T-cell (primary cell): ENCODE measurements at regions of chr1 and their contacts with region 1.

Region 1: DNA sequence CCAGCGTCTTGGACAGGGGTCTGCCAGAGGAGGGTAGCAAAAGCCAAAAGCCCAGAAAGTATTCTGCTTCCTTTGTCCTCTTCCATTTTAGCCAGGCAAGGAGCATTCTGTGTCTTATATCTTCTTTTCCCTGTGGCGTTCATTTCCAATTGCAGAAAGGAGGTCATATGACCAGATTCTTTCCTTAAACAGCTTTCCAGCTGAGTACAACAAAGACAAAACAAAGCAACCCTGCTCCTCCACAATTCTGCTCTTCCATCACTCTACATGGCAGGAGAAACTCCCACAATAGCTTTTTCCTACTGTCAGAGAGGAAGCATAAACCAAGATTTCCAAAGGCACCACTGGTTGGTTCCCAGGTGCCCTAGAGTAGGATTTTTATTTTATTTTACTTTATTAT is 19.7 kb downstream of the ENSA start:
- DNase-seq: no peak
- ATAC-seq: no peak
- H3K4me3 ChIP-seq: no peak overlapping the region
- H3K4me3 Mint-ChIP-seq: no peak overlapping the region
- H3K27ac ChIP-seq: peak overlapping the region; percentile 99
- H3K27ac Mint-ChIP-seq: peak overlapping the region in 1 of 2 donors; percentile 58
- H3K4me1 ChIP-seq: peaks cover 11 to 45% of the 10 kb centered on the region in 2 experiments
- H3K4me1 Mint-ChIP-seq: peaks cover 25 to 47% (median 42%) of the 10 kb centered on the region in 3 donors
- H3K27me3 ChIP-seq: no peaks in the 10 kb centered on the region
- H3K27me3 Mint-ChIP-seq: no peaks in the 10 kb centered on the region

Region 2: GRCh38 chr1:150650199-150650598 is 40.5 kb after region 1 on chr1:
- CTCF ChIA-PET with region 1: no interaction called
- POLR2A ChIA-PET with region 1: interaction called, 6 to 16 read pairs
- DNase-seq: no peak
- ATAC-seq: no peak
- H3K4me3 ChIP-seq: no peak overlapping the region
- H3K4me3 Mint-ChIP-seq: no peak overlapping the region
- H3K27ac ChIP-seq: no peak overlapping the region
- H3K27ac Mint-ChIP-seq: no peak overlapping the region
- H3K4me1 ChIP-seq: no peaks in the 10 kb centered on the region
- H3K4me1 Mint-ChIP-seq: peaks cover 0 to 3% (median 0%) of the 10 kb centered on the region in 3 donors
- H3K27me3 ChIP-seq: no peaks in the 10 kb centered on the region
- H3K27me3 Mint-ChIP-seq: no peaks in the 10 kb centered on the region

Region 3: GRCh38 chr1:151070474-151071276 is 460.9 kb after region 1 on chr1 and contains the start of gene GABPB2:
- CTCF ChIA-PET with region 1: no interaction called
- POLR2A ChIA-PET with region 1: interaction called in 1 of 2 experiments, 14 read pairs
- DNase-seq: peak; percentile 68 to 93 (median 79)
- ATAC-seq: peak; percentile 81 to 85 (median 82)
- H3K4me3 ChIP-seq: peak within 1 kb of the TSS; percentile 87 to 98
- H3K4me3 Mint-ChIP-seq: peak within 1 kb of the TSS; percentile 94 to 97 (median 96)
- H3K27ac ChIP-seq: peak within 1 kb of the TSS; percentile 94
- H3K27ac Mint-ChIP-seq: peak within 1 kb of the TSS; percentile 100
- H3K4me1 ChIP-seq: peaks cover 3 to 24% of the 10 kb centered on the region in 2 experiments
- H3K4me1 Mint-ChIP-seq: peaks cover 24 to 30% (median 28%) of the 10 kb centered on the region in 3 donors
- H3K27me3 ChIP-seq: no peaks in the 10 kb centered on the region
- H3K27me3 Mint-ChIP-seq: no peaks in the 10 kb centered on the region
- total RNA-seq, gene GABPB2: 29.6 to 41.3 (median 32.5) TPM